ENCODE measurements at regions of chr3 and their contacts with region 1.

Region 1: GRCh38 chr3:38651154-38651789 is 1.8 kb upstream of the SCN5A start:
- DNase-seq: peak; percentile 71 to 84
- ATAC-seq: peak; percentile 83
- H3K4me3 ChIP-seq: no peak overlapping the region
- H3K27ac ChIP-seq: no peak overlapping the region
- H3K4me1 ChIP-seq: no peaks in the 10 kb centered on the region
- H3K27me3 ChIP-seq: no peaks in the 10 kb centered on the region

Region 2: DNA sequence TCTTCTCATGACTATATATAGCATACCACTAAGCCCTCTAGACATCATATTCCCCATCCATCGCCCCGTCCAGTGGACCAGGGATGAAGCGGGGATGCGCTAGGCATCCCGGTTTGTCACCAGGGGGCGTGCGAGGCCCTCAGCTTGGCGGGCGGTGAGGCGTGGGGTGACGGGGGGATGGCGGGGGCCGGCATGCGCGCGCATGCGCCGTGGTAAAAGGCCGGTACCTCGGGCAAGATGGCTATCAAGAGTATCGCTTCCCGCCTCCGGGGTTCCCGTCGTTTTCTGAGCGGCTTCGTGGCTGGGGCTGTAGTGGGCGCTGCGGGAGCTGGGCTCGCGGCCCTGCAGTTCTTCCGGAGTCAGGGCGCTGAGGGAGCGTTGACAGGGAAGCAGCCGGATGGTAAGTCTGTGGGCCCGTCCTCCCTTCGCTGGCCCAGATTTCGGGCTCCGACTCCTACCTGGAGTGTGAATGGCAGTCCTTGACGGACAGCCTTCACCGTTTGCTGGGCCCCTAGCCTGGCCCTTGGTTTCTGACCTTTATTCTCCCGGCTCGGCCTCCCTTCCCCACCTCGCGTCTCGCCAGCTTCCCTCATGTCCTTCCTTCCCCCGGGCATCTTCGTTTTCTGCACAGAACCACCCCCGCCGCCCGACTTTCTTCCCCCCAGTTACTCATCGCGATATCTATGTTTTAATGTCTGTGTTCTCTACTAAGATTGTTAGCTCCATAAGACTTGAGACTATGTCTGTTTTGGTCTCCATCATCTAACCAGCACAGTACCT is 155.0 kb before region 1 on chr3 and contains the start of gene EXOG:
- intact Hi-C with region 1: loop called in 1 of 2 experiments (anchors 1 kb)
- DNase-seq: peak; percentile 97 to 99
- ATAC-seq: peak; percentile 99
- H3K4me3 ChIP-seq: peak within 1 kb of the TSS; percentile 64 to 96
- H3K27ac ChIP-seq: peak within 1 kb of the TSS in 1 of 2 donors; percentile 68
- H3K4me1 ChIP-seq: no peaks in the 10 kb centered on the region
- H3K27me3 ChIP-seq: no peaks in the 10 kb centered on the region
- total RNA-seq, gene EXOG: 14.8 to 17.2 TPM

Region 3: DNA sequence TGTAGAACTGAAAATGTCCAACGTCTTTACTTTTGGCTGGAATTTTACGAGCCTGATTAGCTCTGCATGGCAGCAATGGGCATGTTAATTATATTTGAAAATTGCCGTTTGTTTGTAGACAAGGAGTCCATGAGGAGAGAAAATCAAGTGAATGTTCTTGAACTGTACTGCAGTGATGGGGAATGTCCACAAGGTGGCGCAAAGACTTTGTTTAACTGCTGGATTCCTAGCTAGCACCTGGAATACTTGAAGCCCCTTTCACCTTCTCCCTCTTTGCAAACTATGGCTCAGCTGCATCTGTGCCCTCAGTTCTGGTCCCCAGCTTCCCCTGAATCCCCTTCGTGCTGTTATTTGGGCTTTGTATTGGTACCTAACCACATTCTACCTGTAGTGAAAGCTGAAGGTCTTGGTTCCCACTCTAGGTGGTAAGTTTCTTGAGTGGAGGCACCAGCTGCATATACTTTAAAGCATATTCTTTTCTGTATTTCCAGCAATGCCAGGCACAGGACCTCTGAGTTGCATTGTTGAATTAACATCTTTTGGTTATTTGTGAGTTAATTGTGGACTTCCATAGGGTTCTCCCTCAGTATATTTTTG is 129.8 kb before region 1 on chr3:
- intact Hi-C with region 1: loop called (anchors 2 to 5 kb)
- DNase-seq: peak in 1 of 2 donors; percentile 54
- ATAC-seq: peak; percentile 78
- H3K4me3 ChIP-seq: no peak overlapping the region
- H3K27ac ChIP-seq: no peak overlapping the region
- H3K4me1 ChIP-seq: no peaks in the 10 kb centered on the region
- H3K27me3 ChIP-seq: no peaks in the 10 kb centered on the region

Region 4: DNA sequence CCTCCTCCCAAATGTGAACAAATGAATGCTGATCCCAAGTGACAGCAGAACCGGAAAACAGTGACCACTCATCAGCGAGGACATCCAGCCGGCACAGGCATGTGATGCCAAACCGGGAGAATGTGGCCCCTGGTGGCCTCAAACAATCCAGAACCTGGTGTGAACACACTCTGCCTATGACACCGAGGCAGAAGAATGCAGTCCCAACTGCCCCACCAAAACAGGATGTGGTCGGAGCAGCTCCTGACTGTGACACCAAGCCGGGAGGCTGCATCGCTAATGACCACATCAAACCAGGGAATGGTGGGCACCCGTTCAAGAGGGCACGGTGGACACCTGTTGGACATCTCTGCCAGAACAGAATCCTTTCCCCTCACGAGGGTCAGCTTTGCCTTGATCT is 17.2 kb before region 1 on chr3:
- intact Hi-C with region 1: no loop called
- DNase-seq: no peak
- ATAC-seq: no peak
- H3K4me3 ChIP-seq: no peak overlapping the region
- H3K27ac ChIP-seq: no peak overlapping the region
- H3K4me1 ChIP-seq: no peaks in the 10 kb centered on the region
- H3K27me3 ChIP-seq: peaks cover 0 to 2% of the 10 kb centered on the region in 2 donors

Region 5: DNA sequence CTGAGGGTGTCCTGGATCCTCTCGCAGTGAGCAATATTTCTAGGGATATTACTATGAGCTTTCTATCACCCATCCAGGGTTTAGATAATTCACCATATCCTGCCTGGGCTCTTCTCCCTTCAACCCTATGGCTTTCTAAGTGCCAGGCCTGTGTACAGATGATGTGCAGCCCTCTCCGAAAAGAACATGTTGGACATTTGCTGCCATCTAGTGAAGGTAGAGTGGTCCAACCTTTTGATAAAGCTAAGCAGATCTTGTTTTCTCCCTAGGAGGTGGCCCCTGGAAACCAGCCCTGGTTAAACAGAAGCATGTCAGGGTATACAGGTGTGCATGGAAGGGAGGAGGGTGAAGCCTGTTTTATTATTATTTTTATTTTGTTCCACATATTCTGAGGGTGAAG is 192.6 kb after region 1 on chr3:
- intact Hi-C with region 1: loop called in 1 of 2 experiments (anchors 5 kb)
- DNase-seq: no peak
- ATAC-seq: peak; percentile 49
- H3K4me3 ChIP-seq: no peak overlapping the region
- H3K27ac ChIP-seq: no peak overlapping the region
- H3K4me1 ChIP-seq: no peaks in the 10 kb centered on the region
- H3K27me3 ChIP-seq: no peaks in the 10 kb centered on the region

Measured in aorta (tissue), 5 donors.